PC-9 (cell line): ENCODE measurements at regions of chr2 and their contacts with region 1.

Region 1: GRCh38 chr2:183093857-183094657 is 15.5 kb downstream of the DUSP19 start:
- DNase-seq: peak in 1 of 2 experiments; percentile 66
- H3K4me3 ChIP-seq: no peak overlapping the region
- H3K27ac ChIP-seq: no peak overlapping the region
- H3K4me1 ChIP-seq: peaks cover 11% of the 10 kb centered on the region
- H3K27me3 ChIP-seq: no peaks in the 10 kb centered on the region
- CTCF ChIP-seq: peak; percentile 62

Region 2: GRCh38 chr2:182173944-182174622 is 920.0 kb before region 1 on chr2:
- CTCF ChIA-PET with region 1: no interaction called
- POLR2A ChIA-PET with region 1: no interaction called
- intact Hi-C with region 1: no loop called
- DNase-seq: no peak
- H3K4me3 ChIP-seq: no peak overlapping the region
- H3K27ac ChIP-seq: no peak overlapping the region
- H3K4me1 ChIP-seq: no peaks in the 10 kb centered on the region
- H3K27me3 ChIP-seq: no peaks in the 10 kb centered on the region
- CTCF ChIP-seq: no peak

Region 3: GRCh38 chr2:182763311-182763912 is 330.6 kb before region 1 on chr2:
- CTCF ChIA-PET with region 1: no interaction called
- POLR2A ChIA-PET with region 1: no interaction called
- intact Hi-C with region 1: loop called (anchors 1 kb)
- DNase-seq: peak in 1 of 2 experiments; percentile 11
- H3K4me3 ChIP-seq: no peak overlapping the region
- H3K27ac ChIP-seq: no peak overlapping the region
- H3K4me1 ChIP-seq: no peaks in the 10 kb centered on the region
- H3K27me3 ChIP-seq: no peaks in the 10 kb centered on the region
- CTCF ChIP-seq: peak; percentile 86

Region 4: GRCh38 chr2:182784777-182785176 is 309.3 kb before region 1 on chr2:
- CTCF ChIA-PET with region 1: no interaction called
- POLR2A ChIA-PET with region 1: no interaction called
- intact Hi-C with region 1: loop called (anchors 5 kb)
- DNase-seq: peak in 1 of 2 experiments; percentile 46
- H3K4me3 ChIP-seq: no peak overlapping the region
- H3K27ac ChIP-seq: no peak overlapping the region
- H3K4me1 ChIP-seq: no peaks in the 10 kb centered on the region
- H3K27me3 ChIP-seq: no peaks in the 10 kb centered on the region
- CTCF ChIP-seq: peak; percentile 81

Region 5: GRCh38 chr2:183598756-183599155 is 504.7 kb after region 1 on chr2:
- CTCF ChIA-PET with region 1: no interaction called
- POLR2A ChIA-PET with region 1: no interaction called
- intact Hi-C with region 1: no loop called
- DNase-seq: no peak
- H3K4me3 ChIP-seq: no peak overlapping the region
- H3K27ac ChIP-seq: no peak overlapping the region
- H3K4me1 ChIP-seq: no peaks in the 10 kb centered on the region
- H3K27me3 ChIP-seq: no peaks in the 10 kb centered on the region
- CTCF ChIP-seq: no peak